ENCODE measurements at regions of chr12 and their contacts with region 1.

Region 1: GRCh38 chr12:51891843-51892242 is 3.9 kb downstream of the ANKRD33 start:
- DNase-seq: no peak
- H3K4me3 ChIP-seq: no peak overlapping the region
- H3K27ac ChIP-seq: no peak overlapping the region
- H3K4me1 ChIP-seq: peaks cover 0 to 12% (median 5%) of the 10 kb centered on the region in 4 experiments; a peak in 6 of 7 replicates
- H3K27me3 ChIP-seq: peaks cover 0 to 10% (median 6%) of the 10 kb centered on the region in 4 experiments; a peak in 3 of 7 replicates
- CTCF ChIP-seq: peak in 1 of 3 experiments; percentile 13; a peak in 1 of 4 replicates
- EP300 ChIP-seq: no peak
- POLR2A ChIP-seq: no peak
- RAD21 ChIP-seq: peak in 1 of 2 experiments; percentile 16; a peak in 2 of 4 replicates

Region 2: GRCh38 chr12:51980051-51980808 is 88.4 kb after region 1 on chr12:
- CTCF ChIA-PET with region 1: interaction called, 54 read pairs
- POLR2A ChIA-PET with region 1: no interaction called
- DNase-seq: peak in 1 of 2 experiments; percentile 66
- H3K4me3 ChIP-seq: no peak overlapping the region
- H3K27ac ChIP-seq: no peak overlapping the region
- H3K4me1 ChIP-seq: peaks cover 0 to 1% (median 0%) of the 10 kb centered on the region in 4 experiments; a peak in 1 of 7 replicates
- H3K27me3 ChIP-seq: no peaks in the 10 kb centered on the region
- CTCF ChIP-seq: peak; percentile 94 to 97 (median 96)
- EP300 ChIP-seq: no peak
- POLR2A ChIP-seq: no peak
- RAD21 ChIP-seq: peak; percentile 83 to 88

Measured in H1 (cell line).